HEK293 (cell line): ENCODE measurements at regions of chr17 and their contacts with region 1.

Region 1: GRCh38 chr17:71472809-71473789 is 647.7 kb upstream of the SOX9 start:
- H3K4me3 ChIP-seq: no peak overlapping the region
- H3K27ac ChIP-seq: no peak overlapping the region
- H3K4me1 ChIP-seq: no peaks in the 10 kb centered on the region; the same call in 1 of the 2 replicates
- CTCF ChIP-seq: peak; percentile 55; the same call in 1 of the 2 replicates

Region 2: GRCh38 chr17:71276079-71276478 is 197.0 kb before region 1 on chr17:
- CTCF ChIA-PET with region 1: no interaction called
- POLR2A ChIA-PET with region 1: no interaction called
- H3K4me3 ChIP-seq: no peak overlapping the region
- H3K27ac ChIP-seq: no peak overlapping the region
- H3K4me1 ChIP-seq: peaks cover 4% of the 10 kb centered on the region; the same call in 1 of the 2 replicates
- CTCF ChIP-seq: no peak

Region 3: GRCh38 chr17:71342737-71343136 is 130.4 kb before region 1 on chr17:
- CTCF ChIA-PET with region 1: no interaction called
- POLR2A ChIA-PET with region 1: no interaction called
- H3K4me3 ChIP-seq: no peak overlapping the region
- H3K27ac ChIP-seq: no peak overlapping the region
- H3K4me1 ChIP-seq: peaks cover 2% of the 10 kb centered on the region; the same call in 1 of the 2 replicates
- CTCF ChIP-seq: no peak

Region 4: DNA sequence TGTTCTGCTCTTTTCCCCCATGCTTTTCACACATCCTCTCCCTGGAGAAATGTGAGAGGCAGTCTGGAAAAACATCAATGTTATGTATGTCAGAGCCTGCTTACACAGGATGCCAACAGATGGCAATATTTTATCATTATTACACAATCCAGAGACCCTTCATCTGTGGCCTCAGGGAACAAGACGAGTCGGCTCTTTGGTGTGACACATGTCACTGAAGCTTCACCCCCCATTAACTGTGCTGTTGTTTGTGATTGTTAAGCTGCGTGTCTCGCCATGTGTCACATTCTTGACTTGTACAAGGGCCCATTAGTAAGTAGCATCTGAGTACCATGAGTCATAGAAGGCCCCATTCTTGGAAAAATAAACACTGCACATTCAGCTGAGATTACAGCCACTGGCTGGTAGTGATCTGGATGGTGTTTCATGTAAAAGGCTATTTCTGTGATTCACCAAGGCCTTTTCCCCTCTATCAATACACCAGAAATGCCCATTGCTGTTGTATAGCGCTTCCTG is 34.4 kb before region 1 on chr17:
- CTCF ChIA-PET with region 1: interaction called, 14 read pairs
- POLR2A ChIA-PET with region 1: no interaction called
- H3K4me3 ChIP-seq: no peak overlapping the region
- H3K27ac ChIP-seq: peak overlapping the region; percentile 48
- H3K4me1 ChIP-seq: peaks cover 19% of the 10 kb centered on the region
- CTCF ChIP-seq: 0 out of 2 replicates have a peak, but pooled peaks have one; percentile 56